Calu3 (cell line): ENCODE measurements at regions of chr20 and their contacts with region 1.

Region 1: GRCh38 chr20:815914-816606 is 17.5 kb upstream of the FAM110A start:
- DNase-seq: peak; percentile 51
- H3K4me3 Mint-ChIP-seq: no peak overlapping the region
- H3K27ac Mint-ChIP-seq: no peak overlapping the region
- H3K4me1 Mint-ChIP-seq: no peaks in the 10 kb centered on the region
- H3K27me3 Mint-ChIP-seq: peaks cover 48% of the 10 kb centered on the region
- CTCF ChIP-seq: peak; percentile 90

Region 2: GRCh38 chr20:796921-797320 is 19.1 kb before region 1 on chr20:
- CTCF ChIA-PET with region 1: no interaction called
- intact Hi-C with region 1: no loop called
- DNase-seq: no peak
- H3K4me3 Mint-ChIP-seq: no peak overlapping the region
- H3K27ac Mint-ChIP-seq: no peak overlapping the region
- H3K4me1 Mint-ChIP-seq: no peaks in the 10 kb centered on the region
- H3K27me3 Mint-ChIP-seq: peaks cover 53% of the 10 kb centered on the region
- CTCF ChIP-seq: no peak

Region 3: DNA sequence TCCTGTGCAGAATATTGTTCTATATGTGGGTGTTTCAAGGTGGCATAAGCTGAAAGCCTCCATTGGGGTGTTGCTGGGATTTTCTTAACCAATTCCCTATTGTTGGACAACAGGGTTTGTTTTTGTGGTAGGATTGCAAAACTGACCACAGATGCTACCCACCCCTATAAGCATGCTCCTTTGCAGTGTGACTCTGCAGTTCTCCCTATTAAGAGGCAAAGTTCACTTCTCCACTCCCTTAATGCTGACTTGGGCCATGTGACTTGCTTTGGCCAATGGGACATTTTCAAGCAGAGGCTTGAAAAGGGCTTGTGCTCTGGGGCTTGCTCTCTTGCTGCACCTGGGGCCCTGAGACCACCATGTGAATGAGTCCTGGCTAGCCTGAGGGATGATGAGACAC is 108.6 kb after region 1 on chr20:
- CTCF ChIA-PET with region 1: no interaction called
- intact Hi-C with region 1: no loop called
- DNase-seq: no peak
- H3K4me3 Mint-ChIP-seq: no peak overlapping the region
- H3K27ac Mint-ChIP-seq: no peak overlapping the region
- H3K4me1 Mint-ChIP-seq: no peaks in the 10 kb centered on the region
- H3K27me3 Mint-ChIP-seq: peaks cover 44% of the 10 kb centered on the region
- CTCF ChIP-seq: no peak

Region 4: GRCh38 chr20:956330-956951 is 140.4 kb after region 1 on chr20:
- CTCF ChIA-PET with region 1: interaction called, 13 read pairs
- intact Hi-C with region 1: loop called (anchors 1 kb)
- DNase-seq: peak; percentile 72
- H3K4me3 Mint-ChIP-seq: no peak overlapping the region
- H3K27ac Mint-ChIP-seq: no peak overlapping the region
- H3K4me1 Mint-ChIP-seq: no peaks in the 10 kb centered on the region
- H3K27me3 Mint-ChIP-seq: peaks cover 95% of the 10 kb centered on the region
- CTCF ChIP-seq: peak; percentile 83

Region 5: DNA sequence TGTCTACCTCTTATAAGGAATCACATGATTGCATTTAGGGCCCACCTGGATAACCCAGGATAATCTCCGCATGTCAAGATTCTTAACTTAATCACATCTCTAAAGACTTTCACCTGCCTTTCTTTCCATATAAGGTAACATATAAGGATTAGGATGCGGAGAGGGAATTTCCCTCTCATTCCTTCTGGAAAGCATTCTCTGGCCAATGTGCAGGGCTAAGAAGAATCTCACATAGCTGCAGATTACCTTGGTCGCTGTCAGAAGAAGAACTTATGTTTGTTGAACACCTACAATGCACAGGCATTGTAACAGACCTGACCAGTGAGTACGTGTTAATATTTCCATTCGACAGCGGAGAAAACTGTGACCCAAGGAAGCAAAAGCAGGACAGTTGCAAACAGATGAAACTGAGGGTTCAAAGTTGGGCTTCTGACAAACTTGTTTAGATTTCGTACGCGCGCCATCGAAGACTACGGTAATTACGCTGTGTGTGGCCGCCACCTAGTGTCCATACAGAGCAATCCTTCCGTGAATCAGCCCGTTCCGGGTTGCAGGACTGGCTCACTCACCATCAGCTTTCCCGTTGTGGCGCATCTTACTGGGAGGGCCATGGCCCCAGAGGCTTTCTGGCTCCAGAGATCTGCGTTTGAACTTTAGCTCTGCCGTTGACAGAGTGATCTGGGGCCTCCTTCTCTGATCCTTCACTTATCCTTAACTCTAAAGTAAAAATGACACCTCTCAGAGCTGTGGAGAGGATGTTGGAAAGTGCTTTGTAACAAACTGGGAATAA is 396.7 kb after region 1 on chr20:
- CTCF ChIA-PET with region 1: no interaction called
- intact Hi-C with region 1: loop called (anchors 2 kb)
- DNase-seq: peak; percentile 62
- H3K4me3 Mint-ChIP-seq: no peak overlapping the region
- H3K27ac Mint-ChIP-seq: no peak overlapping the region
- H3K4me1 Mint-ChIP-seq: peaks cover 6% of the 10 kb centered on the region
- H3K27me3 Mint-ChIP-seq: peaks cover 74% of the 10 kb centered on the region
- CTCF ChIP-seq: peak; percentile 49